ENCODE measurements at regions of chr12 and their contacts with region 1.

Region 1: DNA sequence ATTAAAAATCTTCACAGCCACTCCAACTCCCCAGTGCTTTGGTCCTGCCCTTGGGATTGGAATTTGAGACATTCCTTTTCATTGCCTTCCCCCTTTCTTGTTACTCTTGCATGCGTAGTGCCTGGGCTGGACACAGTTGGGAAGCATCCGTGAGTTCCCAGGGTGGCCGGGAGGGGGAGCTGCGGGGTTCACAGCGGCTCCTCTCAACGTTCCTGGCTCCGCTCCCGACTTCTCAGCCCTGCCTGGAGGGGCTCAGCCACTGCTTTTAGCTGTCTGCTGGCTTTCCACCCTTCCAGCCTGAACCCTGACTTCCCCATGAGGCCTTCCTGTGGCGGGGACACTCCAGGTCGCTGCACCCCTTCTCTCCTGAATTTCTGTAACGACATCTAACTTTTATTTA is 3.2 kb downstream of the TEX52 start:
- DNase-seq: peak; percentile 66 to 95 (median 87)

Region 2: GRCh38 chr12:2794191-2794735 is 59.4 kb before region 1 on chr12:
- intact Hi-C with region 1: no loop called
- DNase-seq: peak in 17 of 42 donors; percentile 15 to 92 (median 38)

Region 3: DNA sequence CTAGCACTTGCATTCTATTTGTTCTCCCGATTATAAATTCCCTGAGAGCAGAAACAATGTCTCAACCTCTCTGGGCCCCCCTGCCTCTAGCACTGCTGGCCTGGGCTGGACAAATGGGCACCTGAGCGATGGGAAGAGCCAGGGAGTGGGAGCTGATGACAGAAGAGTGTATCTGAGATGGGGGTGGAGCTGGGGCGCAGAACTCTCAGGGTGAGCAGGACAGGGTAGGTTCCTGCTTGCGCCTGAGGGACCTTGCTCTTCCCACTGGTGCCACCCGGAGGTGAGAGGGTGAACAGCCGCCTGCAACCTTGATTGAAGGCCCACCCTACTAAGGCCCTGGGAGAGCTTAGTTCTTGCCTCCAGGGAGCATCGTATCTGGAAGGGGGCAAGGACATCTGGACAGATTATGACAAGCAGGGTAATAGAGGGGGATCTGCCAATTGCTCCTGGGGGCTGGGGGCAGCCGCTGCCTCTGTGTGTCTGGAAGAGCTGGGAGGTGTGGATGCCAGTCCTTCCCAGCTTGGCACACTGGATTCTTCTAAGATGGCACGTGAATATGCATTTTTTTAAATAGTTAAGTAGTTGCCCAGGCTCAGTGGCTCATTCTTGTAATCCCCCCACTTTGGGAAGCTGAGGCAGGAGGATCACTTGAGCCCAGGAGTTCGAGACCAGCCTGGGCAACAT is 180.6 kb after region 1 on chr12:
- intact Hi-C with region 1: loop called (anchors 10 kb)
- DNase-seq: peak; percentile 55 to 91 (median 80)

Measured in head of caudate nucleus (tissue), 42 donors.